ENCODE measurements at regions of chr10 and their contacts with region 1.

Region 1: DNA sequence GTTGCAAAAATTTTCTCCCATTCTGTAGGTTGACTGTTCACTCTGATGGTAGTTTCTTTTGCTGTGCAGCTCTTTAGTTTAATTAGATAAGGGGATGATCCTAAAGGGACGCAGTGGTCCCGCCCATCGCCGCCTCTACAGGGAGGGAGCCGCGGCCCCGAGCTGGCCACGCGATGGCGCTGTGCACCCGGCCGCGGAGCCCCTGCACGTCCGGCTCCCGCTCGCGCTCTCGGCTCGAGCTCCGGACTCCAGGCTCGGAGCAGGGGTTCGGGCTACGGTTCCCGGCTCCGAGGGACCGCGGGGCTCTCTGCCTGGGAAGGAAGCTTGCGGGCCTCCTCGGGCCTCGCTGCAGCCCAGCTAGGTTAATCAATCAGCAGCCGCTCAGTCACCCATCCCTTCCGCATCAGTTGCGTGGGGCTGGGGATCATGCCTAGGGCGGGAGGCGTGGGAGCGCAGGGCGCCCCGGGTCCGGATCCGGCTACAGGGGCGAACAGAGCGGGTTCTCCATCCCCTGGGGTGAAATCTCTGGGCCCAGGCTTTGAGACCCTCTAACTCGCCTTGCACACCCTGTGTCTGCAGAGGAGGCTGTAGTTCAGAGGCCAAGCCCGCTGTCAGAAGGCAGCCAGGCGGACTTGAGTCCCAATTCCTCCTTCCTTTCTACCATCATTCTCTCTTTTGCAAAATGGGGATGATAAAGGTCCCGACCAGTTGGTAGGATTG is 97.9 kb downstream of the WDR11 start:
- DNase-seq: peak in 4 of 5 donors; percentile 41 to 49 (median 46)
- H3K4me3 ChIP-seq: peak overlapping the region; percentile 30 to 52
- H3K4me3 Mint-ChIP-seq: peak overlapping the region; percentile 21 to 73 (median 60)
- H3K27ac ChIP-seq: no peak overlapping the region
- H3K27ac Mint-ChIP-seq: no peak overlapping the region
- H3K4me1 ChIP-seq: peaks cover 13% of the 10 kb centered on the region
- H3K4me1 Mint-ChIP-seq: peaks cover 0 to 10% (median 3%) of the 10 kb centered on the region in 4 donors
- H3K27me3 ChIP-seq: peaks cover 17% of the 10 kb centered on the region
- H3K27me3 Mint-ChIP-seq: peaks cover 24 to 31% of the 10 kb centered on the region in 2 donors

Region 2: DNA sequence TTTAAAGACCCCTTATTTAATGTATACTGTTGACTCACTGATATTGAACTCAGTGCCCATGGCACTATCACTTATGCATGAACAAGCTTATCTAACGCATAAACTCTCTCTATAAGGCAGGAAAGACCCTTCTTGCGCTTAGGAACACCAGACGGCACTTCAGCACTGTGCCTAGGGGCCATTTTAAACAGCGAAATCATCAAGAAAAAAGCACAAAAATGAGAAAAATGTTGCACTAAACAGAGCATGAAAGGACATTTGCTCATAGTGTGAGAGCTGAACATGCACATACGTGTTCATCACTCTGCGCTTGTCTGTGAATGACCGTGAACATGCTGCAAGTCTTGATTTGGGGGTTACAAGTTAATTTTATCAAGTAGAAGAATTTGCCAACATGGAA is 11.7 kb after region 1 on chr10:
- CTCF ChIA-PET with region 1: interaction called, 14 read pairs
- POLR2A ChIA-PET with region 1: no interaction called
- intact Hi-C with region 1: no loop called
- DNase-seq: no peak
- H3K4me3 ChIP-seq: no peak overlapping the region
- H3K4me3 Mint-ChIP-seq: no peak overlapping the region
- H3K27ac ChIP-seq: no peak overlapping the region
- H3K27ac Mint-ChIP-seq: peak overlapping the region in 1 of 7 donors; percentile 13
- H3K4me1 ChIP-seq: no peaks in the 10 kb centered on the region
- H3K4me1 Mint-ChIP-seq: no peaks in the 10 kb centered on the region
- H3K27me3 ChIP-seq: no peaks in the 10 kb centered on the region
- H3K27me3 Mint-ChIP-seq: peaks cover 1 to 8% of the 10 kb centered on the region in 2 donors

Region 3: DNA sequence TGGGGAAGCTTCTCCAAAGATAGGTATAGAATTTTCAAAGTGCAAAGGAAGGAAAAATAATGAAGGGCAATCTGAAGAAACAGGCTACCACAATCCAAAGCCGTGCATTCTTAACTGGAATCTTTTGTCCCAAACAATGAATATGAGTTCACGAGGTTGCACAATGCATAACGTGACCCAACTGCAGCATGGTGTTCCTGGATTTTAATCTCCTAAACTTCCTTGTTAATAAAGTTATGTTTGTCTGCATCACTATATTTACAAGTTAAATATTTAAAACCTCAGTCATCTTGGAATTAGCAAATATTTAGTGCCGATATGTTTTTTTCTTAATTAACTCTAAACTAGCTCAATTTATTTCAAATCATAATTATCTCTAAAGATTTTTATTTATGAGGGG is 105.9 kb after region 1 on chr10:
- CTCF ChIA-PET with region 1: no interaction called
- POLR2A ChIA-PET with region 1: no interaction called
- intact Hi-C with region 1: no loop called
- DNase-seq: no peak
- H3K4me3 ChIP-seq: no peak overlapping the region
- H3K4me3 Mint-ChIP-seq: no peak overlapping the region
- H3K27ac ChIP-seq: no peak overlapping the region
- H3K27ac Mint-ChIP-seq: no peak overlapping the region
- H3K4me1 ChIP-seq: no peaks in the 10 kb centered on the region
- H3K4me1 Mint-ChIP-seq: no peaks in the 10 kb centered on the region
- H3K27me3 ChIP-seq: no peaks in the 10 kb centered on the region
- H3K27me3 Mint-ChIP-seq: no peaks in the 10 kb centered on the region

Region 4: GRCh38 chr10:121608469-121609190 is 659.6 kb after region 1 on chr10:
- CTCF ChIA-PET with region 1: interaction called, 11 read pairs
- POLR2A ChIA-PET with region 1: no interaction called
- intact Hi-C with region 1: no loop called
- DNase-seq: peak in 4 of 5 donors; percentile 6 to 22 (median 8)
- H3K4me3 ChIP-seq: no peak overlapping the region
- H3K4me3 Mint-ChIP-seq: no peak overlapping the region
- H3K27ac ChIP-seq: no peak overlapping the region
- H3K27ac Mint-ChIP-seq: no peak overlapping the region
- H3K4me1 ChIP-seq: no peaks in the 10 kb centered on the region
- H3K4me1 Mint-ChIP-seq: peaks cover 0 to 1% (median 0%) of the 10 kb centered on the region in 4 donors
- H3K27me3 ChIP-seq: no peaks in the 10 kb centered on the region
- H3K27me3 Mint-ChIP-seq: peaks cover 13 to 19% of the 10 kb centered on the region in 2 donors

Region 5: DNA sequence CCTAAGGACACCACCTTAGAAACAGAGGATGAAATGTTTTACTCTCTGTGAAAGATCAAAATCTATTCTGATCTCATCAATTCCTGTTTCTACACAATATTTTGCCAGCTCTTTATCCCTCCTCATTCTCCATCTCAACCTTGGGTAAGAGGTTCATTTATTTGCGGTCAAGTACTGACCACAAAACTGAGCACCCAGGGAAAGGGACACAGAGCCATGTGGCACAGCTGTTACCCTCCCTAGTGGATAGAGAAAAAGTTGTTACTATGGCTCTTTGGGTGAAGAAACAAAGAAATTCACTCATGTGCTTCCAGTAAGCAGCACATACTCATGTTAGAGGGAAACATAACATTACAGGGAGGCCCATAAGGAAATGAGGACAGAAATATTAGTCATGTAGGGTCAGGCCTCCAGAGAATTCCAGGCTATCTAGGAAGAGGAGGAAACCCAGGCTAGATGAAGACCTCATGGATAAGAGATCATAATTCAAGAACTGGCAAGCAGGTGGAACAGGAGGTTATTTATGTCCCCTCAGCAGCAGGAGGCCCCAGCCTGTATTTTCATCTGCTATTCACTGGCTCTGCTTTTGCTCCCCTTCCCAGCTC is 864.3 kb after region 1 on chr10:
- CTCF ChIA-PET with region 1: no interaction called
- POLR2A ChIA-PET with region 1: no interaction called
- intact Hi-C with region 1: no loop called
- DNase-seq: no peak
- H3K4me3 ChIP-seq: no peak overlapping the region
- H3K4me3 Mint-ChIP-seq: no peak overlapping the region
- H3K27ac ChIP-seq: no peak overlapping the region
- H3K27ac Mint-ChIP-seq: no peak overlapping the region
- H3K4me1 ChIP-seq: no peaks in the 10 kb centered on the region
- H3K4me1 Mint-ChIP-seq: peaks cover 0 to 2% (median under 1%) of the 10 kb centered on the region in 4 donors
- H3K27me3 ChIP-seq: no peaks in the 10 kb centered on the region
- H3K27me3 Mint-ChIP-seq: no peaks in the 10 kb centered on the region

Region 6: GRCh38 chr10:121886997-121887622 is 938.1 kb after region 1 on chr10:
- CTCF ChIA-PET with region 1: interaction called, 12 read pairs
- POLR2A ChIA-PET with region 1: no interaction called
- intact Hi-C with region 1: no loop called
- DNase-seq: peak in 4 of 5 donors; percentile 17 to 26 (median 24)
- H3K4me3 ChIP-seq: no peak overlapping the region
- H3K4me3 Mint-ChIP-seq: no peak overlapping the region
- H3K27ac ChIP-seq: no peak overlapping the region
- H3K27ac Mint-ChIP-seq: peak overlapping the region in 1 of 7 donors; percentile 52
- H3K4me1 ChIP-seq: no peaks in the 10 kb centered on the region
- H3K4me1 Mint-ChIP-seq: peaks cover 0 to 5% (median under 1%) of the 10 kb centered on the region in 4 donors
- H3K27me3 ChIP-seq: no peaks in the 10 kb centered on the region
- H3K27me3 Mint-ChIP-seq: no peaks in the 10 kb centered on the region

Region 7: DNA sequence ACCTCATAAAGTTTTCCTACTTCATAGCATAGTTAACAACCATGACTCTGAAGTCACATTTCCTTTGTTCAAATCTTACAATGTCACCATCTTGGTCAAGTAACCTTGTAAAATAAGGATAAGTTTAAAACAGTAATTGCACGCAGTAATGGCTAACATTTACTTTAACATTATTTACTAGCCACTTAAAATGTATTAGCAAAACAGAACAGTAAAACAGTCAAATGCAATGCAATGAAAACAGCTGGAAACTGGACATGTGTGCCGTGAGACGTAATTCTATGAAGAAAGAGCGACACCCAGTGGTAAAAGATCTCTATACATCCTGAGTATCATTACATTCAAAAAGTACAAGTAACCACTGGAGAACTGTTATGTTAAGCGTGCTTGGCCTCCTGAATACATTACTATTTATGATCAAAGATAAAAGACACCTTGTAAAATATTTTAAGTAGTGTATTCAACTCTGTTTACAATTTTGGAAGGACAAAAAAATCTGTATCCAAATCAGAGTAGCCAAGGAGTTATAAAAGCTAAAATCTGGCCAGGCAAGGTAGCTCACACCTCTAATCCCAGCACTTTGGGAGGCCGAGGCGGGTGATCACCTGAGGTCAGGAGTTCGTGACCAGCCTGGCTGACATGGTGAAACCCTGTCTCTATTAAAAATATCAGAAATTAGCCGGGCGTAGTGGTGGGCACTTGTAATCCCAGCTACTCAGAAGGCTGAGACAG is 951.6 kb after region 1 on chr10:
- CTCF ChIA-PET with region 1: interaction called, 7 read pairs
- POLR2A ChIA-PET with region 1: no interaction called
- intact Hi-C with region 1: loop called (anchors 1 kb)
- DNase-seq: peak in 4 of 5 donors; percentile 20 to 38 (median 23)
- H3K4me3 ChIP-seq: no peak overlapping the region
- H3K4me3 Mint-ChIP-seq: peak overlapping the region in 1 of 8 donors; percentile 10
- H3K27ac ChIP-seq: no peak overlapping the region
- H3K27ac Mint-ChIP-seq: peak overlapping the region in 1 of 7 donors; percentile 62
- H3K4me1 ChIP-seq: no peaks in the 10 kb centered on the region
- H3K4me1 Mint-ChIP-seq: peaks cover 0 to 7% (median 3%) of the 10 kb centered on the region in 4 donors
- H3K27me3 ChIP-seq: no peaks in the 10 kb centered on the region
- H3K27me3 Mint-ChIP-seq: no peaks in the 10 kb centered on the region

Measured in CD4-positive, alpha-beta memory T cell (primary cell).